ENCODE measurements at regions of chr7 and their contacts with region 1.

Region 1: GRCh38 chr7:26061688-26062150 is 90.3 kb upstream of the NFE2L3 start:
- DNase-seq: peak in 5 of 10 donors; percentile 7 to 39 (median 27)
- H3K4me3 ChIP-seq: no peak overlapping the region
- H3K27ac ChIP-seq: no peak overlapping the region
- H3K27me3 ChIP-seq: peaks cover 0 to 49% (median 10%) of the 10 kb centered on the region in 45 donors
- CTCF ChIP-seq: peak in 55 of 56 donors; percentile 32 to 73 (median 58)

Region 2: GRCh38 chr7:25894902-25895791 is 166.6 kb before region 1 on chr7:
- intact Hi-C with region 1: loop called (anchors 5 to 10 kb)
- DNase-seq: peak in 9 of 10 donors; percentile 49 to 81 (median 60)
- H3K4me3 ChIP-seq: peak overlapping the region in 56 of 59 donors; percentile 0 to 62 (median 41)
- H3K27ac ChIP-seq: peak overlapping the region in 1 of 59 donors; percentile 5
- H3K27me3 ChIP-seq: peaks cover 0 to 24% (median 0%) of the 10 kb centered on the region in 45 donors
- CTCF ChIP-seq: peak; percentile 32 to 80 (median 68)

Measured in dorsolateral prefrontal cortex (tissue), 120 donors.